K562 (cell line): ENCODE measurements at regions of chr12 and their contacts with region 1.

Region 1: GRCh38 chr12:120580787-120581723 is at the start of gene POP5:
- DNase-seq: peak; percentile 92 to 99 (median 94)
- ATAC-seq: peak; percentile 95
- H3K4me3 ChIP-seq: peak within 1 kb of the TSS; percentile 70
- H3K27ac ChIP-seq: peak within 1 kb of the TSS; percentile 66
- H3K4me1 ChIP-seq: peaks cover 13 to 19% of the 10 kb centered on the region in 2 experiments; a peak in 3 of 5 replicates
- H3K27me3 ChIP-seq: peaks cover 5 to 8% of the 10 kb centered on the region in 2 experiments; a peak in 3 of 5 replicates
- CTCF ChIP-seq: 0 out of 6 replicates have a peak, but pooled peaks of 1 of the 3 experiments have one; percentile 4
- EP300 ChIP-seq: no peak
- POLR2A ChIP-seq: peak; percentile 93
- RAD21 ChIP-seq: no peak
- polyA plus RNA-seq, gene POP5: 235 to 253 TPM

Region 2: DNA sequence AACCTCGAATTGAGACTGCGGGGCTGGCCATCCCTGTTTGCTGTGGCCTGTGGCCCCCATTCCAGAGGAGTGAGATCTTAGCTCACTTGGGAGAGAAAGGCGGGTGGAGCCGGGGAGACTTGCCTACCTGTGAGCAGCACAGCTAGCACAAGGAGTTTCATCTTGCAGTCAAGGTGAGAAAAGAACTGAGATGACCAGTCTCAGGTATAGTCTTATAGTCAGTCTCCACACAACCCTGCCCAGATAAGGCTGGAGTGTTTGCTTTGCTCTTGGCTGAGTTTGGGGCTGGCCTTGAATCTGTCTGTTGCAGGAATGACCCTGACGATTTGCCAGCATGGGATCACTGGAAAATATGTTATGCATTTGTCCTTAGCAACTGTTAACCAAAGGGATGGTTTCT is 253.5 kb before region 1 on chr12 and contains the start of gene PLA2G1B:
- CTCF ChIA-PET with region 1: interaction called, 4 read pairs
- POLR2A ChIA-PET with region 1: interaction called, 5 read pairs
- in situ Hi-C with region 1: no loop called
- intact Hi-C with region 1: loop called (anchors 5 kb)
- DNase-seq: no peak
- ATAC-seq: no peak
- H3K4me3 ChIP-seq: no peak within 1 kb of the TSS
- H3K27ac ChIP-seq: no peak within 1 kb of the TSS
- H3K4me1 ChIP-seq: peaks cover 0 to 5% of the 10 kb centered on the region in 2 experiments; a peak in 3 of 5 replicates
- H3K27me3 ChIP-seq: peaks cover 19 to 20% of the 10 kb centered on the region in 2 experiments; a peak in 3 of 5 replicates
- CTCF ChIP-seq: no peak
- EP300 ChIP-seq: no peak
- POLR2A ChIP-seq: no peak
- RAD21 ChIP-seq: no peak
- polyA plus RNA-seq, gene PLA2G1B: not detected

Region 3: GRCh38 chr12:120445911-120446843 is 134.9 kb before region 1 on chr12 and contains the starts of genes GATC and TRIAP1:
- CTCF ChIA-PET with region 1: no interaction called
- POLR2A ChIA-PET with region 1: interaction called, 3 read pairs
- in situ Hi-C with region 1: no loop called
- intact Hi-C with region 1: loop called (anchors 5 kb)
- DNase-seq: peak; percentile 85 to 95 (median 86)
- ATAC-seq: peak; percentile 93
- H3K4me3 ChIP-seq: peak within 1 kb of the TSS; percentile 99
- H3K27ac ChIP-seq: peak within 1 kb of the TSS; percentile 89
- H3K4me1 ChIP-seq: peaks cover 2 to 8% of the 10 kb centered on the region in 2 experiments; a peak in 3 of 5 replicates
- H3K27me3 ChIP-seq: no peaks in the 10 kb centered on the region; a peak in 1 of 5 replicates
- CTCF ChIP-seq: no peak
- EP300 ChIP-seq: no peak; the same call in 1 of the 2 replicates
- POLR2A ChIP-seq: peak; percentile 94
- RAD21 ChIP-seq: 0 out of 4 replicates have a peak, but pooled peaks of 1 of the 2 experiments have one; percentile 5
- polyA plus RNA-seq, gene GATC: 5.8 to 14.3 TPM
- polyA plus RNA-seq, gene TRIAP1: 354 TPM

Region 4: GRCh38 chr12:120649442-120650232 is 68.6 kb after region 1 on chr12:
- CTCF ChIA-PET with region 1: interaction called, 19 read pairs
- POLR2A ChIA-PET with region 1: interaction called, 8 read pairs
- in situ Hi-C with region 1: no loop called
- intact Hi-C with region 1: loop called (anchors 1 kb)
- DNase-seq: no peak
- ATAC-seq: 0 out of 3 replicates have a peak, but pooled peaks have one; percentile 10
- H3K4me3 ChIP-seq: no peak overlapping the region
- H3K27ac ChIP-seq: no peak overlapping the region
- H3K4me1 ChIP-seq: peaks cover 3 to 6% of the 10 kb centered on the region in 2 experiments; a peak in 2 of 5 replicates
- H3K27me3 ChIP-seq: peaks cover 29 to 54% of the 10 kb centered on the region in 2 experiments
- CTCF ChIP-seq: peak in 1 of 3 experiments; percentile 9; a peak in 1 of 6 replicates
- EP300 ChIP-seq: no peak
- POLR2A ChIP-seq: no peak
- RAD21 ChIP-seq: no peak

Region 5: GRCh38 chr12:120686690-120687577 is 105.9 kb after region 1 on chr12 and contains the start of gene MLEC:
- CTCF ChIA-PET with region 1: interaction called, 6 read pairs
- POLR2A ChIA-PET with region 1: no interaction called
- in situ Hi-C with region 1: no loop called
- intact Hi-C with region 1: loop called (anchors 1 kb)
- DNase-seq: peak; percentile 98 to 100 (median 100)
- ATAC-seq: peak; percentile 92
- H3K4me3 ChIP-seq: peak within 1 kb of the TSS; percentile 91
- H3K27ac ChIP-seq: peak within 1 kb of the TSS; percentile 91
- H3K4me1 ChIP-seq: peaks cover 14 to 17% of the 10 kb centered on the region in 2 experiments; a peak in 3 of 5 replicates
- H3K27me3 ChIP-seq: no peaks in the 10 kb centered on the region
- CTCF ChIP-seq: peak; percentile 26 to 65 (median 52); a peak in 4 of 6 replicates
- EP300 ChIP-seq: peak; percentile 70
- POLR2A ChIP-seq: peak; percentile 80
- RAD21 ChIP-seq: peak; percentile 49 to 65
- polyA plus RNA-seq, gene MLEC: 18.5 to 20.5 TPM

Region 6: DNA sequence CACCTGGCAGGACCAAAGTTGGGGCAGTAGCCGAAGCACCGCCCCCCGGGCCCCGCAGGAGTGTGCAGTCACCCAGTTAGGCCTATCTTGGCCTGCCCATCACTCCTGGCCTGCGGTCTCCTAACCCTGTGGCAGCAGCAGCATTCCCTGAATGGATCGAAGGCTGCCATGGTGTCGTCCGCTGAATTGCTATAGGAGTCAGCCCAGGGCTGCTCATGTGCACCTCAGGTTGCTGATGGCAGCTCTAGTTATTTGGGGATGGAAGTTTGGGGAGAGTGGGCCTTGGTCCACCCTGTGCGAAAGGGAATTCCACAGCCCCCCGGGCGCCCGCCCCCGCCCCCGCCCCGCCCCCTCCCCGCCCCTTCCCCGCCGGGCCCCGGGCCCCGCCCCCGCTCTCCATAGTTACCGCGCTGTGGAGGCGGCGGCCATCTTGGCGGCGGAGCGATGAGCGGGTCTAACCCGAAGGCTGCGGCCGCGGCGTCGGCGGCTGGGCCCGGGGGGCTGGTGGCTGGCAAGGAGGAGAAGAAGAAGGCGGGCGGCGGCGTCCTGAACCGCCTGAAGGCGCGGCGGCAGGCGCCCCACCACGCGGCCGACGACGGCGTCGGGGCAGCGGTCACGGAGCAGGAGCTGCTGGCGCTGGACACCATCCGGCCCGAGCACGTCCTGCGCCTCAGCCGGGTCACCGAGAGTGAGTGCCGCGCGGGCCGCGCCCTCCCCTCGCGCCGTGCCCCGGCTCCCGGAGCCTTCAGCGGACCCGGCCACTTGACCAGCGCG is 129.2 kb after region 1 on chr12 and contains the start of gene UNC119B:
- CTCF ChIA-PET with region 1: interaction called, 12 read pairs
- POLR2A ChIA-PET with region 1: interaction called, 4 read pairs
- in situ Hi-C with region 1: loop called (anchors 5 kb)
- intact Hi-C with region 1: loop called (anchors 1 kb)
- DNase-seq: peak; percentile 75 to 92 (median 90)
- ATAC-seq: peak; percentile 94
- H3K4me3 ChIP-seq: peak within 1 kb of the TSS; percentile 83
- H3K27ac ChIP-seq: peak within 1 kb of the TSS; percentile 71
- H3K4me1 ChIP-seq: peaks cover 7 to 17% of the 10 kb centered on the region in 2 experiments; a peak in 4 of 5 replicates
- H3K27me3 ChIP-seq: no peaks in the 10 kb centered on the region
- CTCF ChIP-seq: no peak
- EP300 ChIP-seq: no peak
- POLR2A ChIP-seq: peak; percentile 67
- RAD21 ChIP-seq: no peak
- polyA plus RNA-seq, gene UNC119B: 4.0 to 6.5 TPM

Region 7: GRCh38 chr12:120971299-120972179 is 390.5 kb after region 1 on chr12:
- CTCF ChIA-PET with region 1: interaction called, 12 read pairs
- POLR2A ChIA-PET with region 1: no interaction called
- in situ Hi-C with region 1: no loop called
- intact Hi-C with region 1: loop called (anchors 1 kb)
- DNase-seq: peak; percentile 43 to 72 (median 59)
- ATAC-seq: peak; percentile 92
- H3K4me3 ChIP-seq: no peak overlapping the region
- H3K27ac ChIP-seq: no peak overlapping the region
- H3K4me1 ChIP-seq: peaks cover 0 to 2% of the 10 kb centered on the region in 2 experiments; a peak in 1 of 5 replicates
- H3K27me3 ChIP-seq: no peaks in the 10 kb centered on the region
- CTCF ChIP-seq: peak; percentile 69 to 94 (median 85)
- EP300 ChIP-seq: no peak
- POLR2A ChIP-seq: no peak
- RAD21 ChIP-seq: peak; percentile 81 to 94